PC-3 (cell line): ENCODE measurements at regions of chr12 and their contacts with region 1.

Region 1: GRCh38 chr12:90572778-90573177 is 382.2 kb downstream of the CCER1 start:
- DNase-seq: peak; percentile 9
- ATAC-seq: peak; percentile 93
- H3K4me3 ChIP-seq: no peak overlapping the region
- H3K27ac ChIP-seq: no peak overlapping the region
- H3K4me1 ChIP-seq: peaks cover 9% of the 10 kb centered on the region; the same call in 1 of the 2 replicates
- H3K27me3 ChIP-seq: no peaks in the 10 kb centered on the region
- CTCF ChIP-seq: no peak

Region 2: DNA sequence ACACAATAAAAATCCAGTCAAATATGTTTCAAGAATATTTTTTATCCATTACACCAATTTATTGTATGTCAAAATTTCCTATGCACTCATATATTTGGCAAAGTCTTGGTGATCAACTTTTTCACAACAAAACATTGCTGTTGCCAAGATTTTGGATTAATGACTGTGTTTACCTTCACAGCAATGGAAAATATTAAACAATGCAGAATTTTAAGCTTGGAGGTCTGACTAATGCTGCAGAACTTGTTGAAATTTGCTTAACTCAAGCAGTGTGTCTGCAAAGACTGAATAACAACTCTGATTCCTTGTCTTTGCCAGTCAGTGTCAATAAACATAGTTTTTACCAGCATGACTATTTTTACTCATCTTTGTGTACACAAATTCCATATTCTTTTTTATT is 45.8 kb after region 1 on chr12:
- CTCF ChIA-PET with region 1: no interaction called
- POLR2A ChIA-PET with region 1: no interaction called
- intact Hi-C with region 1: loop called (anchors 2 kb)
- DNase-seq: peak; percentile 46
- ATAC-seq: peak; percentile 84
- H3K4me3 ChIP-seq: no peak overlapping the region
- H3K27ac ChIP-seq: no peak overlapping the region
- H3K4me1 ChIP-seq: no peaks in the 10 kb centered on the region
- H3K27me3 ChIP-seq: no peaks in the 10 kb centered on the region
- CTCF ChIP-seq: no peak